ENCODE measurements at regions of chr5 and their contacts with region 1.

Region 1: DNA sequence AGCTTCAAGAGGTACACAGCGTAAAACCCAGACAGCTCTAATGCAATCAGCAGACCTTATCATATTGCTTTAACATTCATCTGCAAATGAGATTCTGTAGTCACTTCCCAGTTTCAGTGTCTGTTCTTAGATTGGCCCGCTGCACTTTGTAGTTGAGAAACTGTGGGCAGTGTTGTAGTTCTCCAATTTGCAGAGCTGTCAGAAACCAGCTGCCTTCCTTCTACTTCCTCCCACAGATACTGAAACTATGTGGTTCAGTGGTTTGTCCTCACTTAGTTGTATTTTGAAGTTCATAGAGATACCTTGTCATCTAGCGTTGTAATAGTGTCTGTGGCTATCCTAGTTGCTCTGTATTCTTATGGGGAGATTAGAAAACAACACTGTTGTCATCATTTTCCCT is 39.6 kb upstream of the TRIM36 start:
- DNase-seq: peak; percentile 53
- H3K4me3 Mint-ChIP-seq: no peak overlapping the region
- H3K27ac Mint-ChIP-seq: no peak overlapping the region
- H3K4me1 Mint-ChIP-seq: peaks cover 8% of the 10 kb centered on the region
- H3K27me3 Mint-ChIP-seq: no peaks in the 10 kb centered on the region

Region 2: GRCh38 chr5:115180165-115180709 is 29.0 kb before region 1 on chr5:
- CTCF ChIA-PET with region 1: no interaction called
- intact Hi-C with region 1: loop called (anchors 2 kb)
- DNase-seq: peak; percentile 27
- H3K4me3 Mint-ChIP-seq: peak overlapping the region; percentile 67
- H3K27ac Mint-ChIP-seq: no peak overlapping the region
- H3K4me1 Mint-ChIP-seq: peaks cover 3% of the 10 kb centered on the region
- H3K27me3 Mint-ChIP-seq: peaks cover 69% of the 10 kb centered on the region